PC-3 (cell line): ENCODE measurements at regions of chr1 and their contacts with region 1.

Region 1: GRCh38 chr1:246699095-246699735 is 25.0 kb upstream of the SCCPDH start:
- DNase-seq: peak; percentile 96
- ATAC-seq: peak; percentile 95
- H3K4me3 ChIP-seq: peak overlapping the region; percentile 39
- H3K27ac ChIP-seq: peak overlapping the region; percentile 7
- H3K4me1 ChIP-seq: peaks cover 9% of the 10 kb centered on the region
- H3K27me3 ChIP-seq: no peaks in the 10 kb centered on the region
- CTCF ChIP-seq: peak; percentile 95

Region 2: DNA sequence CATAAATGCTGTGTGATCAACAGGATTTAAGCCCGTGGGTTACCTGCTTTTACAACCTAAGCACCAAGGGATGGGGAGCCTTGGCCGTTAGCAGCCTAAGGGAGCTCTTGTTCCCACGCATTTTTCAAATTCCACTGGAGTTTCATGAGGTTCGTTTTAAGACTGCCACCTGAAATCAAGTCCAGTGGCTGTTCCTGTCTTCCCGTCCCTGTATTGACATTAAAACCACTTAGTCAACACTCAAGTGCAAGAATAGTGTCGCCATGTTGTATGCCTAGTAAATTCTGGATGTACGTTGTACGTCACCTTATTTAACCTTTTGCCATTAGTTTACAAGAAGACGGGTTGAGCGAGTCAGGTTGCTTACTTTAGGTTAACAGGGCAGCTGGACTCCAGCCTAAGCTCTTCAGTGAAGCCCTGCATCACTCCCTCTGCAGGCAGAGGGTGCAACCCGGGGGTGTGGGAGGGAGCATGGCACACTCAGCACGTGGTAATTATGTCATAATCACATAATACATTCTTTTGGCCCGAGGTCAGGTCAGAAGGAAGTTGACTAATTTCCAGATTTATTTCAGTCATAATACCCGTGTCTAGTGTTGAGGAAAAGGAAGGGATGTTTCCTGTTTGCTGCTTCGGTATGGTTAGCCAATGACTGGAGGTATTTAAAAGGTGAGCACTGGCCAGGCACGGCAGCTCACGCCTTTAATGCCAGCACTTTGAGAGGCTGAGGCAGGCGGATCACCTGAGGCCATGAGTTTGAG is 90.4 kb before region 1 on chr1:
- CTCF ChIA-PET with region 1: no interaction called
- POLR2A ChIA-PET with region 1: no interaction called
- intact Hi-C with region 1: loop called (anchors 1 kb)
- DNase-seq: peak; percentile 99
- ATAC-seq: peak; percentile 91
- H3K4me3 ChIP-seq: peak overlapping the region; percentile 17
- H3K27ac ChIP-seq: peak overlapping the region; percentile 75
- H3K4me1 ChIP-seq: peaks cover 18% of the 10 kb centered on the region
- H3K27me3 ChIP-seq: no peaks in the 10 kb centered on the region
- CTCF ChIP-seq: peak; percentile 44

Region 3: DNA sequence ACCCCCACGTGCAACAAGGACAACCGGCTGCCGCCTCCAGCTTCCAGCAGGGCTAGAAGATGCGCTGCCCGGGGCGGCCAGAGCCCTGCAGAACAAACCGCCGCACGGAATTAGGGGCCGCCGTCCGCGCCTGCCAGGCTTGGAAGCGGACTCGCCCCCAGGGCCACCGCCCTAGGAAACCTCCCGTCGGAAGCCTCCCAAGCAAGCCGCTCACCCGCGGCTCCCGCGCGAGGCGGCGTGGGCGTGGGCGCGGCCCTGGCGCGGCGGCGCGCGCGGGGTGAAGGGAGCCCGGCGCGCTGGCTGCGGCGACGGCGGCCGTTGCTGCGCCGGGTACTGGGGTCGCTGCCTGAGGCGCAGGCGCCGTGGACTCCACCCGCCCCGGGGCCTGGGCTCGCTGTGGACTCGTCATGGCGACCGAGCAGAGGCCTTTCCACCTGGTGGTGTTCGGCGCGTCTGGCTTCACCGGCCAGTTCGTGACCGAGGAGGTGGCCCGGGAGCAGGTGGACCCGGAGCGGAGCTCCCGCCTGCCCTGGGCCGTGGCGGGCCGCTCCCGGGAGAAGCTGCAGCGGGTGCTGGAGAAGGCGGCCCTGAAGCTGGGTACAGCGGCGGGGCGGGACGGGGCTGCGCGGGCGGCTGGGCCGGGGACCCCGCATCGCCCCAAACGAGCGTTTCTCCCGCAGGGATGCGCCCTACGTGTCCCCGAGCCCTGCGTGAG is 25.0 kb after region 1 on chr1 and contains the start of gene SCCPDH:
- CTCF ChIA-PET with region 1: no interaction called
- POLR2A ChIA-PET with region 1: no interaction called
- intact Hi-C with region 1: loop called (anchors 1 kb)
- DNase-seq: peak; percentile 76
- ATAC-seq: peak; percentile 90
- H3K4me3 ChIP-seq: peak within 1 kb of the TSS; percentile 79
- H3K27ac ChIP-seq: peak within 1 kb of the TSS; percentile 65
- H3K4me1 ChIP-seq: no peaks in the 10 kb centered on the region
- H3K27me3 ChIP-seq: no peaks in the 10 kb centered on the region
- CTCF ChIP-seq: no peak
- total RNA-seq, gene SCCPDH: 46.1 and 50.8 TPM in 2 replicates